Activated CD4-positive, alpha-beta memory T cell treated with anti-CD3 and anti-CD28 coated beads, Interleukin-2, amount 10 ng/mL, durations not matched to agents 7 days and 5 days (primary cell): ENCODE measurements at regions of chr10 and their contacts with region 1.

Region 1: GRCh38 chr10:45580371-45581215 is 92.0 kb downstream of the ZFAND4 start:
- DNase-seq: peak; percentile 23
- H3K4me3 Mint-ChIP-seq: peak overlapping the region; percentile 81
- H3K27ac Mint-ChIP-seq: peak overlapping the region; percentile 93
- H3K4me1 Mint-ChIP-seq: peaks cover 30% of the 10 kb centered on the region
- H3K27me3 Mint-ChIP-seq: peaks cover 3% of the 10 kb centered on the region

Region 2: GRCh38 chr10:44478876-44479705 is 1101.5 kb before region 1 on chr10:
- CTCF ChIA-PET with region 1: no interaction called
- POLR2A ChIA-PET with region 1: no interaction called
- DNase-seq: no peak
- H3K4me3 Mint-ChIP-seq: no peak overlapping the region
- H3K27ac Mint-ChIP-seq: no peak overlapping the region
- H3K4me1 Mint-ChIP-seq: no peaks in the 10 kb centered on the region
- H3K27me3 Mint-ChIP-seq: no peaks in the 10 kb centered on the region

Region 3: DNA sequence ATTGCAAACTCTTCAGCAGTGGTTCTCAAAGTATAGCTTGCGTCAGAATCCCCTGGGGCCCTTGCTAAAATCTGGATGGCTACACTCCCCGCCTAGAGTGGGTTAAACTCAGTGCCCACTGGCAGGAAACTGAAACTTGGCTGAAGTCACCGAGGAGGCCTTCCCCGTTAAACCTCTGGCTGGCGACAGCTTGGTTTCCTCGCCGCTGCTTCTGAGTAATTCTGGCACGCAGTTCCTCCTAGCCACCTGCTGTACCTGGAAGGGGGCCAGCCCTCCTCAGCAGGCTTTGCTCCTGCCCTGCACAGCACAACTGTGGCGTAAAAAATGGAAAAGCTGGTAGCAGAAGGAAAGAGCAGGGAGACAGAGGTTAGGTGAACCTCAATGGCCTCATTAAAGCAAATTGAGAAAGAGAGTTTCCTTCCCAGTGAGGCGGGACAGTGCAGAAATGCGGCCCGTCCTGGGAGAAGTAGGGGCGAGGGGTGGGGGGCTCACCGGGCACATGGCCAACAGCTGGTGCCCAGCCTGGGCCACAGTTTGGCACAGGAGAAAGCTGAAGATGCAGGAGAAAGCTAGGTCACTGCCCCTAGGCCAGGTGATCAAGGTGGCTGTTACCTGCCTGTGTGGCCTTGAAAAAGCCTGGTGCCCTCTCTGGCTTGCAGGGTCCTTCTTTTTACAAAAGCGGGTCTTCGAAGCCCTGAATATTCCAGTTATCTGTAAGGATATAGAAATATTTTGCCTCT is 160.0 kb before region 1 on chr10:
- CTCF ChIA-PET with region 1: no interaction called
- POLR2A ChIA-PET with region 1: interaction called, 10 read pairs
- DNase-seq: peak; percentile 81
- H3K4me3 Mint-ChIP-seq: peak overlapping the region; percentile 98
- H3K27ac Mint-ChIP-seq: peak overlapping the region; percentile 100
- H3K4me1 Mint-ChIP-seq: peaks cover 89% of the 10 kb centered on the region
- H3K27me3 Mint-ChIP-seq: no peaks in the 10 kb centered on the region

Region 4: GRCh38 chr10:45464958-45465567 is 115.5 kb before region 1 on chr10:
- CTCF ChIA-PET with region 1: interaction called, 13 read pairs
- POLR2A ChIA-PET with region 1: no interaction called
- DNase-seq: peak; percentile 82
- H3K4me3 Mint-ChIP-seq: no peak overlapping the region
- H3K27ac Mint-ChIP-seq: no peak overlapping the region
- H3K4me1 Mint-ChIP-seq: peaks cover 54% of the 10 kb centered on the region
- H3K27me3 Mint-ChIP-seq: no peaks in the 10 kb centered on the region

Region 5: GRCh38 chr10:45557275-45557905 is 23.2 kb before region 1 on chr10:
- CTCF ChIA-PET with region 1: interaction called, 3 read pairs
- POLR2A ChIA-PET with region 1: interaction called, 10 read pairs
- DNase-seq: peak; percentile 49
- H3K4me3 Mint-ChIP-seq: no peak overlapping the region
- H3K27ac Mint-ChIP-seq: peak overlapping the region; percentile 74
- H3K4me1 Mint-ChIP-seq: peaks cover 24% of the 10 kb centered on the region
- H3K27me3 Mint-ChIP-seq: no peaks in the 10 kb centered on the region

Region 6: GRCh38 chr10:45594276-45595106 is 13.9 kb after region 1 on chr10:
- CTCF ChIA-PET with region 1: interaction called, 3 read pairs
- POLR2A ChIA-PET with region 1: interaction called, 40 read pairs
- DNase-seq: peak; percentile 91
- H3K4me3 Mint-ChIP-seq: peak overlapping the region; percentile 82
- H3K27ac Mint-ChIP-seq: peak overlapping the region; percentile 67
- H3K4me1 Mint-ChIP-seq: peaks cover 34% of the 10 kb centered on the region
- H3K27me3 Mint-ChIP-seq: peaks cover 5% of the 10 kb centered on the region

Region 7: DNA sequence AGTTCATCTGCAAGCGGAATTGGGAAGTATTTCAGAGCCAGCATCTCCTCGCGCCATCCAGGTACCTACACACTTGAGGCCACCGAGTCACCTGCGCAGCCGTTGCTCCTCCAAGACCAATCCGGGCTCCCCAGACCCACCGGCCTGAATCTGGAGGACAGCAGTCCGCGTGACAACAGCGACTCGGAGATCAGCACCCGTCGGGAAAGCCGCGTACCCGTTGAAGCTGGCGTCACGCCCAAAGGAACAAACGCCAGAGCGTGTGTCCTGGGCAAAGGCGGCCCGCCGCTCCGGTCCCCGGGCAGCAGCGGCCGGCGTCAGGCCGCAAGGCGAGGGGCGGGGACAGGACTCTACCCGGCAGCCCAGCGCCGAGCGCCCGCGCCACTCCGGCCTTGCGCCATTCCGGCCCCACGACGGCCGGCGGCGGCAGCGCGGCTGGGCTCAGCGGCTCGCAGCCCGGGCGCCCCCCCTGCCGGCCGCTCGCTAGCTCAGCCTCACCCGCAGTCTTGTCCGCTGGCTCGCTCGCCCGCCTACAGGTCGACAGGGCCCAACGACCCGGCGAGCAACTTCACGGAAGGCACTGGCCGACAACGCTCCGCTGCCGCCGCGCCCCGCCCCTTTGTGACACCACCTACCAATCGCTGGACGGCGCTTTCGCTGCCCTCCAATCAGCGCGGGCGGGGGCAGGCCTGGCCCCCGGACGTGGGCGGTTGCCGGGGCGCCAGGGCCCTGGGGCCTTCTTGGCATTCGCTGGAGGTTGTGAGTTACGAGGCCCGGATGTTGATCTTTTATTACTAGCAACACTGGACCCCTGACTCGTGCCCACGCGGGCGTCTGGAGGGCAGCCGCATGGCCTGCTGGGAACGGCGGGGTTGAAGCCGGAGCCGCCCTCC is 91.8 kb after region 1 on chr10 and contains the start of gene ZFAND4:
- CTCF ChIA-PET with region 1: no interaction called
- POLR2A ChIA-PET with region 1: interaction called, 11 read pairs
- DNase-seq: peak; percentile 96
- H3K4me3 Mint-ChIP-seq: peak within 1 kb of the TSS; percentile 92
- H3K27ac Mint-ChIP-seq: peak within 1 kb of the TSS; percentile 80
- H3K4me1 Mint-ChIP-seq: peaks cover 33% of the 10 kb centered on the region
- H3K27me3 Mint-ChIP-seq: no peaks in the 10 kb centered on the region
- total RNA-seq, gene ZFAND4: 19.6 to 19.7 TPM